CD8-positive, alpha-beta T cell (primary cell): ENCODE measurements at regions of chr7 and their contacts with region 1.

Region 1: GRCh38 chr7:21261627-21262594 is 166.0 kb upstream of the SP4 start:
- DNase-seq: peak; percentile 7 to 75 (median 52)
- ATAC-seq: peak; percentile 90
- H3K4me3 ChIP-seq: no peak overlapping the region
- H3K4me3 Mint-ChIP-seq: no peak overlapping the region
- H3K27ac ChIP-seq: no peak overlapping the region
- H3K27ac Mint-ChIP-seq: no peak overlapping the region
- H3K4me1 ChIP-seq: no peaks in the 10 kb centered on the region
- H3K4me1 Mint-ChIP-seq: peaks cover 10% of the 10 kb centered on the region
- H3K27me3 ChIP-seq: no peaks in the 10 kb centered on the region
- H3K27me3 Mint-ChIP-seq: peaks cover 7% of the 10 kb centered on the region
- CTCF ChIP-seq: peak; percentile 66

Region 2: GRCh38 chr7:21507626-21508343 is 245.9 kb after region 1 on chr7:
- CTCF ChIA-PET with region 1: interaction called, 18 read pairs
- POLR2A ChIA-PET with region 1: no interaction called
- intact Hi-C with region 1: loop called in 1 of 2 experiments (anchors 1 kb)
- DNase-seq: peak in 4 of 9 experiments; percentile 17 to 54 (median 32)
- ATAC-seq: no peak
- H3K4me3 ChIP-seq: no peak overlapping the region
- H3K4me3 Mint-ChIP-seq: no peak overlapping the region
- H3K27ac ChIP-seq: no peak overlapping the region
- H3K27ac Mint-ChIP-seq: no peak overlapping the region
- H3K4me1 ChIP-seq: no peaks in the 10 kb centered on the region
- H3K4me1 Mint-ChIP-seq: no peaks in the 10 kb centered on the region
- H3K27me3 ChIP-seq: no peaks in the 10 kb centered on the region
- H3K27me3 Mint-ChIP-seq: no peaks in the 10 kb centered on the region
- CTCF ChIP-seq: peak; percentile 58

Region 3: GRCh38 chr7:21526007-21526406 is 264.1 kb after region 1 on chr7:
- CTCF ChIA-PET with region 1: interaction called, 4 read pairs
- POLR2A ChIA-PET with region 1: no interaction called
- intact Hi-C with region 1: loop called (anchors 5 kb)
- DNase-seq: peak in 2 of 9 experiments; percentile 33 to 43
- ATAC-seq: no peak
- H3K4me3 ChIP-seq: no peak overlapping the region
- H3K4me3 Mint-ChIP-seq: no peak overlapping the region
- H3K27ac ChIP-seq: no peak overlapping the region
- H3K27ac Mint-ChIP-seq: no peak overlapping the region
- H3K4me1 ChIP-seq: no peaks in the 10 kb centered on the region
- H3K4me1 Mint-ChIP-seq: no peaks in the 10 kb centered on the region
- H3K27me3 ChIP-seq: no peaks in the 10 kb centered on the region
- H3K27me3 Mint-ChIP-seq: peaks cover 3% of the 10 kb centered on the region
- CTCF ChIP-seq: peak; percentile 22

Region 4: GRCh38 chr7:22082886-22083703 is 821.2 kb after region 1 on chr7:
- CTCF ChIA-PET with region 1: interaction called, 3 read pairs
- POLR2A ChIA-PET with region 1: no interaction called
- intact Hi-C with region 1: loop called (anchors 1 to 2 kb)
- DNase-seq: peak; percentile 65 to 88 (median 81)
- ATAC-seq: peak; percentile 97
- H3K4me3 ChIP-seq: peak overlapping the region; percentile 47 to 61
- H3K4me3 Mint-ChIP-seq: peak overlapping the region; percentile 85
- H3K27ac ChIP-seq: peak overlapping the region in 1 of 2 experiments; percentile 57
- H3K27ac Mint-ChIP-seq: peak overlapping the region; percentile 82
- H3K4me1 ChIP-seq: peaks cover 7% of the 10 kb centered on the region
- H3K4me1 Mint-ChIP-seq: peaks cover 13% of the 10 kb centered on the region
- H3K27me3 ChIP-seq: peaks cover 0 to 5% of the 10 kb centered on the region in 2 experiments
- H3K27me3 Mint-ChIP-seq: peaks cover 18% of the 10 kb centered on the region
- CTCF ChIP-seq: peak; percentile 93